GM10248 (cell line): ENCODE measurements at regions of chr16 and their contacts with region 1.

Region 1: GRCh38 chr16:13919683-13920509 is at the start of gene ERCC4:
- DNase-seq: peak; percentile 99
- CTCF ChIP-seq: peak; percentile 80

Region 2: DNA sequence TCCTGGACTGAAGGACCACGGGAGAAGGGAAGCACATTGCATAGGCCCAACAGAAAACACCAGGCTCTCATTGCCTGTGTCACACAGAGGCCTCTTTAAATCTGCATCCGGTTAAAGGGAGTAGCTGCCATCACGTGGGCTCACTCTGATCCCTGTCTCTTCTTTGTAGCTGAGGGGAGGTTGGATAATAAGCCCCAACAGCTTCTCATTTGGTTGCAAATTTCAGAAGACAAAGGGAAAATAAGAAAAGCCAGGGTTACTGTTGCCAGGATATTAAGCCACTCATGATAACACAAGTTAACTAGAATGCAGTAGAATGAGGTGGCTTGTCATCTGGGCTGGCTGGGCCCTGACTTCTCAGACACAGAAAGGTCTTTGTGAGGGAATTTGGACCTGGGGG is 325.1 kb before region 1 on chr16:
- CTCF ChIA-PET with region 1: no interaction called
- POLR2A ChIA-PET with region 1: no interaction called
- DNase-seq: no peak
- CTCF ChIP-seq: no peak

Region 3: GRCh38 chr16:13833510-13833909 is 86.4 kb before region 1 on chr16:
- CTCF ChIA-PET with region 1: no interaction called
- POLR2A ChIA-PET with region 1: no interaction called
- DNase-seq: no peak
- CTCF ChIP-seq: no peak

Region 4: DNA sequence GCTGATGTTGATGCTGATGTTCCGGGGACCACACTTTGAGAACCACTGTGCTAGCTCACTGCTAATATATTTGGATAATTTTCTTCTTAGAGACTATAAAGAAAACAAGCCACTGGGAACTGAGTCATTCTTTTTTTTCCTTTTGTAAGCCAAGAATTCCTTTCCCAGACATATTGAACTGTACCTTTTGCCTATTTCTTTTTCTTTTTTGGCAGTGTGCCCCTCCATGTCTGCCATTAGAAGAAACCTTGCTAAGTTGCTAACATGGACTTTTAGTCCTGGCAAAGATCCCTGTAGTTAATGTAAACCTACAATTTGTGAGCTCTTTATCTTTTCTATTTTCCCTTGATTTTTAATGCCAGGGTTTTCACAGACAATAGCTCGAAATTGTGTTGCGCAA is 17.2 kb before region 1 on chr16:
- CTCF ChIA-PET with region 1: interaction called, 43 read pairs
- POLR2A ChIA-PET with region 1: no interaction called
- DNase-seq: no peak
- CTCF ChIP-seq: no peak

Region 5: GRCh38 chr16:13935408-13935807 is 15.5 kb after region 1 on chr16:
- CTCF ChIA-PET with region 1: interaction called, 17 read pairs
- POLR2A ChIA-PET with region 1: no interaction called
- DNase-seq: no peak
- CTCF ChIP-seq: peak; percentile 8

Region 6: GRCh38 chr16:14117059-14117458 is 197.2 kb after region 1 on chr16:
- CTCF ChIA-PET with region 1: no interaction called
- POLR2A ChIA-PET with region 1: no interaction called
- DNase-seq: no peak
- CTCF ChIP-seq: no peak

Region 7: DNA sequence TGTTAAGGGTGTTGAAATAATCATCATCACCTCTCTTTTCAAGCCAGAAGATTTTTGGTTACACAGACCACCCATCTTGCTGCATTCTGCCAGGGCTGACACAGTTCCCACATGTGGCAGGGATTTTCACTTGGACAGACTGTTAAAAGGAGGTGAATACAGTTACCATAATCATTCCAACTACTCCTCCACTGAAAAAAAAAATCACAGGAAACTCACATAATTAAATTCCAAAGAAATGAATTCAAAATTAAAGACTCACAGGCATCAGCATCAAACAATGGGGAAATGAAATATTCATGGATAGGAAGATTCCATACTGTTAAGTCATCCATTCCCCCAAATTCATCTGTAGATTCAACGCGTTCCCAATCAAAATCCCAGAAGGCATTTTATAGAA is 360.6 kb after region 1 on chr16:
- CTCF ChIA-PET with region 1: interaction called, 21 read pairs
- POLR2A ChIA-PET with region 1: interaction called, 3 read pairs
- DNase-seq: no peak
- CTCF ChIP-seq: no peak

Region 8: DNA sequence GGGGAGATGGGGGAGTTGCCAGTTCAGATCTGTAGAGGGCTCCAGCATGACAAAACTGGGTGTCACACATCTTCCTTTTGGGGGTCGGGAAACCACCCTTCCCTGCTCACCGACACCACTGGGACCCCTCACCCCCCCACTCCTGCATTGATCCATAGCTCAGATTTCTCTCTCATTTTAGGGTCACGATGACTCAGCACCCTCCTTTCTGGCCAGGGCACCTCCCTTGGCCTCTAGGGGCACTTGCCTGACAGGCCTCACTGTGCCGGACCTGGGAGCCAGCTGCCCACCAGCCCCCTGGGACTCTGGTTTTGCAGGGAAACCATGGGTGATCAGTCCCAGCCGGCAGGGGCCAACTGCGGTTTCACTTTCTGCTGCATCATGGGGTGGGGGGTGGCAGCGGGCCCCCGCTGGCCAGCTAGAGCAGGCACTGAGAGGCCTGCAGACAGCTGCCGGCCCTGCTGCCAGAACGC is 390.7 kb after region 1 on chr16:
- CTCF ChIA-PET with region 1: interaction called, 12 read pairs
- POLR2A ChIA-PET with region 1: no interaction called
- DNase-seq: peak; percentile 70
- CTCF ChIP-seq: peak; percentile 17